ENCODE measurements at regions of chr7 and their contacts with region 1.

Region 1: GRCh38 chr7:102404005-102404861 is 8.1 kb downstream of the PRKRIP1 start:
- DNase-seq: peak; percentile 79
- CTCF ChIP-seq: peak; percentile 80

Region 2: DNA sequence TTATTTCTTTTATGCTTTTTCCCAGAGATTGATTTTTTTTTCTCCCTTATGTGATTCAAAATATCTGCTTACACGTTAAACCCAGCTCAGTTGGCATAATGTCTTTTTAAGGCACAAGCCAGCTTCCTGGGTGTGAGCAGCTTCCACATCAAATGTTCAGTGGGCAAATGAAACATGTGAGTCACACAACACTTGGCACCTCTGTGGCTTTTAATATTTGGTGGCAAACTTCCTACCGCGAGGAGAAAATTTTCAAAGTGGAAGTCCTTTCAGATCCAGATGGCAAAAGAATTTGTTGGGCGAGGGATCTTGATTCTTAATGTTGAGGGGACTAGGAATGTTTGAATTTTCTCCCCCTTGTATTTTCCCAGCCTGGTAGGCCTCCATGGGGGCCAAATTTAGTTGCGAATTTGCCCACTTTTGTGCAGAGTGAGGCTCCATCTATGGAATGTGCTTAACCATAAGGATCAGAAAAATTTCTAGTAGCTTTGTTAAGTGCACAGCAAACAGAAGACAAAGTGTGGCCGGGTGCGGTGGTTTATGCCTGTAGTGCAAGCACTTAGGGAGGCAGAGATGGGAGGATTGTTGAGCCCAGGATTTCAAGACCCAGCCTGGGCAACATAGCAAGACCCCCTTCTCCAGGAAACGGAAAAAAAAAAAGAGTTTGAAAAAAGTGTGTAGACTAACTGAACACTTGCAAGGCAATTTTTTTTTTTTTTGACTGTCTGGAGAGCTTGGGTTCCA is 555.9 kb before region 1 on chr7:
- CTCF ChIA-PET with region 1: no interaction called
- POLR2A ChIA-PET with region 1: no interaction called
- DNase-seq: no peak
- CTCF ChIP-seq: no peak

Region 3: GRCh38 chr7:102425639-102426267 is 21.5 kb after region 1 on chr7:
- CTCF ChIA-PET with region 1: interaction called, 10 read pairs
- POLR2A ChIA-PET with region 1: no interaction called
- DNase-seq: peak; percentile 87
- CTCF ChIP-seq: no peak

Region 4: DNA sequence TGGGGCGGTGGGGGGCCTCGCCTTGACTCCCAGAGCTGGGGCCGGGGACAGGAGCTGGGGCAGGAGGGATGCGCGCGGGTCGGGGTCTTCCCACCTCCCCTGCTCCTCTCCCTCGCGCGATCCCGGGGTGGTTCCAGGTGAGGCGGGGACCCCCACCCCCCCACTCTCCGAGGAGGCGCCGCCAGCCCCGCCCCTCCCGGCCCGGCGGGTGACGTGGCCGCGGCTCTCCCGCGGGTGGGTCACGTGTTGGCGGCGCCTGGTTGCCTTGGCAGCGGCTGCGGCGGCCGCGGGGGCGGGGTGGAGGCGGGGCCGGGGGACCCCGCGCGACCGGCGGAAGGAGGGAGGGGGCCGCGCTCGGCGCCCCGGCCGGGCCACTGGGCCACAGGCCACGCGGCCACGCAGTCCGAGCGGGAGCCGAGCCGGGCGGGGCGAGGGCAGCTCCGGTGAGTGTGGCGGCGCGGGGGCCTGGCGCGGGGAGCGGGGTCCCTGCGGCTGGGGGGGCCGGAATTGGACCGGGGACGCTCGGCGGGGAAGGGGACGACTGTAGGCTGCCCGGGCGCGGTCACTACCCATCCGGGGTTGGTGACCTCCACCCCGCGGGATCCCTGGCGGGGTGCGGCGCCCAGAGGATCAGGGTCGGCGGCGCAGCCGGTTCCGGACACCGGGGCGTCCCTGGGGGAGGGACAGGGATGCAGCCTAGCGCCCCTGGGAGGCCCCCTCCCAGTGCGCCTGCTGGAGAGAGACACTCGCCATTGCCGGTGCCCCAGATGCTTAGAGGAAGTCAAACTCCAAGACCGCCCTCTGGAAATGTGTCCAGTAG is 29.2 kb after region 1 on chr7 and contains the start of gene ORAI2:
- CTCF ChIA-PET with region 1: interaction called, 23 read pairs
- POLR2A ChIA-PET with region 1: interaction called, 5 read pairs
- DNase-seq: peak; percentile 90
- CTCF ChIP-seq: no peak

Region 5: DNA sequence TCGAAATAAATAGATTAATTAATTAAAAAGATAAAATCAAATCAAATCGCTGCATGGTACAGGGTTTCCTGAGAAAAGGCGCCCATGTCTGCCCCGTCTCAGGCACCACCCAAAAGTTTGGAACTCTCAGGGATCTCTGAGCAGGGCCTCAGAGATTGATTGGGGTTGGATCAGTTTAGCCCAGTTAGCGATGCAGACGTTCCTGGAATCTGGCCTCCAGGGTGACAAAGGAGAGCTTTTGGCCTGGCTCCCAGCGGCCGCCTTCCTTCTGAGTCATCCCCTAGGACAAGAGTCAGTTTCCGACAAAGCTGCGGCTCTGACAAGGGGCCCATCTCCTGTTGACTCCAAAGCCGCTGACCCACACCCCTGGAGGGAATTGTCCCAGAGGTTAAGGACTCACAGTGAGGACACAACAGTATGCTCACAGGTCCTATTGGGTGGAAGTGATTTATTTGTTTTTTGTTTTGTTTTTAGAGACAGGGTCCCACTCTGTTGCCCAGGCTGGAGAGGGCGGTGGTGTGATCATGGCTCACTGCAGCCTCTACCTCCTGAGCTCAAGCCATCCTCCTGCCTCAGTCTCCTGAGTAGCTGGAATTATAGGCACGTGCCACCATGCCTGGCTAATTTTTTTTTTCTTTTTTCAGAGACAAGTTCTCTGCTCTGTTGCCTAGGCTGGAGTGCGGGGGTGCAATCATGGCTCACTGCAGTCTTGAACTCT is 36.0 kb after region 1 on chr7:
- CTCF ChIA-PET with region 1: interaction called, 23 read pairs
- POLR2A ChIA-PET with region 1: interaction called, 5 read pairs
- DNase-seq: no peak
- CTCF ChIP-seq: no peak

Region 6: DNA sequence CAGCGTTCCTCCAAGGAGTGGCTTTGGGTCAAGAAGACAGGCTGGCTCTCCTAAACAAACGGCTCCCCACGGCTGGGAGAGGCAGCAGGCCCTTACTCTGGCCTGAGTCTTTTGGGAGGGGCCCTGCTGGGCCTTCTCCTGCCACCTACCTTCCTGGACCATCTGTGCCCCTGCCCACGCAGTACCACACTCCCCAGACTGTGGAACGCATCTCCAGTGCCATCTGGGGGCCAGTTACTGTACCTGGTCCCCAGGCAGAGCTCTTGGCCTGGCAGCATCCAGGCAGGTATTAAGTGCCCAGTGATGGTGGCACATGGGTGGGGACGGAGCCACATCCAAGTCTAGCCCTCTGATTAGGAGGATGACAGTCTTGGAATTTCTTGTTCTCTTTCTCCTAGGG is 46.0 kb after region 1 on chr7:
- CTCF ChIA-PET with region 1: interaction called, 16 read pairs
- POLR2A ChIA-PET with region 1: no interaction called
- DNase-seq: no peak
- CTCF ChIP-seq: peak; percentile 63

Region 7: DNA sequence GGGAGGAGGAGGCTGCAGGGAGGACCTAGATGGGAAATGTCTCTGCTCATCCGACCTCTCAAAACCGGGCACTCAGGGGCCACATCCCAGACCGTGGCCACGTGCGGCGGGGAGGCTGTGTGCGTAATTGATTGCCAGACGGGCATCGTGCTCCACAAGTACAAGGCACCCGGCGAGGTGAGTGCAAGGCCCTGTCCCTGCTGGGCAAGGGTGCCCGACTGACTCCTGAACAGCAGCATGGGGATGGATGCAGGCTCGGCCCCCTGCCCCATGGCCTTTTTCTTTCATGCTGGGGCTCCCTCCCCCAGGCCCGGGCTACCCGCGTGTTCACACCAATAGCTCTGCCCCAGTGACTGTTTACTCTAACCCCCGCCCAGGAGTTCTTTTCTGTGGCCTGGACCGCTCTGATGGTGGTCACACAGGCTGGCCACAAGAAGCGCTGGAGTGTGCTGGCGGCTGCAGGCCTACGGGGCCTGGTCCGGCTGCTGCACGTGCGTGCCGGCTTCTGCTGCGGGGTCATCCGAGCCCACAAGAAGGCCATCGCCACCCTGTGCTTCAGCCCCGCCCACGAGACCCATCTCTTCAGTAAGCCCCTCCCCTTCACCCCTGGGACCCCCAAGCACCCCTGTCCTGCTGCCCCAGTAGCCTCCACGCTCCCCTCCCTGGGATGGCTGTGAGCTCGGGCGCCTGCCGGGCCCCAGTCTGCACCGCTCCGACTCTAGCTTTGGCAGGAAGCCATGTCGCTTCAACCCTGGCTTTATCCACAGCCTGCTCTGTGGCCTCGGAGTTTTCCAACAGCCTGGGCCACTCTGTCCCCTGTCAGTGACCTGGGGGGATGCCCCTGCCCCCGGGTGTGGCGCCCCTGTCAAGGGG is 64.5 kb after region 1 on chr7:
- CTCF ChIA-PET with region 1: interaction called, 16 read pairs
- POLR2A ChIA-PET with region 1: no interaction called
- DNase-seq: no peak
- CTCF ChIP-seq: no peak